ENCODE measurements at regions of chr20 and their contacts with region 1.

Region 1: GRCh38 chr20:34312544-34313217 is 9.5 kb upstream of the AHCY start:
- DNase-seq: peak; percentile 79 to 90
- ATAC-seq: peak; percentile 92 to 94
- H3K4me3 ChIP-seq: peak overlapping the region; percentile 38
- H3K27ac ChIP-seq: peak overlapping the region; percentile 54 to 80
- H3K4me1 ChIP-seq: peaks cover 41% of the 10 kb centered on the region
- CTCF ChIP-seq: peak; percentile 100
- EP300 ChIP-seq: no peak
- POLR2A ChIP-seq: no peak
- RAD21 ChIP-seq: peak; percentile 100

Region 2: DNA sequence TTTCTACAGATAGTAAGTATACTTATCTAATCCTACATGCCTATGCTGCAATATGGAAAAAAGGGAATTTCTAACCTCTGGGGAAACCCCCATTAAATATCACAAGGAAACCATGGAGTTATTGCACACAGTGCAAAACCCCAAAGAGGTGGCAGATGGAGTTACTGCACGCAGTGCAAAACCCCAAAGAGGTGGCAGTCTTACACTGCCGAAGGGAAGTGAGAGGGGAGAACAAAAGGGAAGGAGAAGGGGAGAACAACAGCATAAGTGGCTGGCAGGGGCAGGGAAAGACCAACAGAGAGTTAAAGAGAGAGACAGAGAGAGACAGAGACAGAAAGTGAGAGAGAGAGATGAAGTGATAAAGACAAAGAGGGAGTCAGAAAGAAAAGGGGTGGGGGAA is 156.8 kb before region 1 on chr20:
- CTCF ChIA-PET with region 1: no interaction called
- POLR2A ChIA-PET with region 1: no interaction called
- DNase-seq: no peak
- ATAC-seq: no peak
- H3K4me3 ChIP-seq: no peak overlapping the region
- H3K27ac ChIP-seq: no peak overlapping the region
- H3K4me1 ChIP-seq: no peaks in the 10 kb centered on the region
- CTCF ChIP-seq: no peak
- EP300 ChIP-seq: no peak
- POLR2A ChIP-seq: no peak
- RAD21 ChIP-seq: no peak

Region 3: GRCh38 chr20:34334654-34335407 is 22.1 kb after region 1 on chr20:
- CTCF ChIA-PET with region 1: interaction called, 66 read pairs
- POLR2A ChIA-PET with region 1: no interaction called
- DNase-seq: no peak
- ATAC-seq: peak in 1 of 2 experiments; percentile 43; a peak in 1 of 6 replicates
- H3K4me3 ChIP-seq: no peak overlapping the region
- H3K27ac ChIP-seq: peak overlapping the region in 1 of 2 experiments; percentile 57; a peak in 3 of 6 replicates
- H3K4me1 ChIP-seq: peaks cover 19% of the 10 kb centered on the region; the same call in 2 of the 3 replicates
- CTCF ChIP-seq: no peak
- EP300 ChIP-seq: no peak
- POLR2A ChIP-seq: no peak
- RAD21 ChIP-seq: no peak

Region 4: GRCh38 chr20:34397096-34397495 is 84.4 kb after region 1 on chr20:
- CTCF ChIA-PET with region 1: interaction called, 58 read pairs
- POLR2A ChIA-PET with region 1: no interaction called
- DNase-seq: no peak
- ATAC-seq: no peak
- H3K4me3 ChIP-seq: no peak overlapping the region
- H3K27ac ChIP-seq: 0 out of 6 replicates have a peak overlapping the region, but pooled peaks of 1 of the 2 experiments have one; percentile 8
- H3K4me1 ChIP-seq: peaks cover 37% of the 10 kb centered on the region
- CTCF ChIP-seq: no peak
- EP300 ChIP-seq: no peak
- POLR2A ChIP-seq: no peak
- RAD21 ChIP-seq: no peak

Region 5: GRCh38 chr20:34445177-34446065 is 132.7 kb after region 1 on chr20:
- CTCF ChIA-PET with region 1: interaction called, 33 read pairs
- POLR2A ChIA-PET with region 1: no interaction called
- DNase-seq: no peak
- ATAC-seq: no peak
- H3K4me3 ChIP-seq: no peak overlapping the region
- H3K27ac ChIP-seq: no peak overlapping the region
- H3K4me1 ChIP-seq: no peaks in the 10 kb centered on the region
- CTCF ChIP-seq: no peak
- EP300 ChIP-seq: no peak
- POLR2A ChIP-seq: no peak
- RAD21 ChIP-seq: no peak

Region 6: GRCh38 chr20:34485068-34485634 is 172.5 kb after region 1 on chr20:
- CTCF ChIA-PET with region 1: interaction called, 33 read pairs
- POLR2A ChIA-PET with region 1: no interaction called
- DNase-seq: no peak
- ATAC-seq: no peak
- H3K4me3 ChIP-seq: no peak overlapping the region
- H3K27ac ChIP-seq: no peak overlapping the region
- H3K4me1 ChIP-seq: no peaks in the 10 kb centered on the region
- CTCF ChIP-seq: no peak
- EP300 ChIP-seq: no peak
- POLR2A ChIP-seq: no peak
- RAD21 ChIP-seq: no peak

Region 7: GRCh38 chr20:34562643-34563042 is 250.0 kb after region 1 on chr20:
- CTCF ChIA-PET with region 1: interaction called, 11 read pairs
- POLR2A ChIA-PET with region 1: no interaction called
- DNase-seq: peak; percentile 39 to 51
- ATAC-seq: peak; percentile 48 to 67; a peak in 4 of 6 replicates
- H3K4me3 ChIP-seq: no peak overlapping the region
- H3K27ac ChIP-seq: no peak overlapping the region
- H3K4me1 ChIP-seq: peaks cover 10% of the 10 kb centered on the region; the same call in 2 of the 3 replicates
- CTCF ChIP-seq: peak; percentile 24; the same call in 2 of the 3 replicates
- EP300 ChIP-seq: no peak
- POLR2A ChIP-seq: no peak
- RAD21 ChIP-seq: peak; percentile 36; a peak in 4 of 5 replicates